Endothelial cell of umbilical vein (primary cell): ENCODE measurements at regions of chr20 and their contacts with region 1.

Region 1: DNA sequence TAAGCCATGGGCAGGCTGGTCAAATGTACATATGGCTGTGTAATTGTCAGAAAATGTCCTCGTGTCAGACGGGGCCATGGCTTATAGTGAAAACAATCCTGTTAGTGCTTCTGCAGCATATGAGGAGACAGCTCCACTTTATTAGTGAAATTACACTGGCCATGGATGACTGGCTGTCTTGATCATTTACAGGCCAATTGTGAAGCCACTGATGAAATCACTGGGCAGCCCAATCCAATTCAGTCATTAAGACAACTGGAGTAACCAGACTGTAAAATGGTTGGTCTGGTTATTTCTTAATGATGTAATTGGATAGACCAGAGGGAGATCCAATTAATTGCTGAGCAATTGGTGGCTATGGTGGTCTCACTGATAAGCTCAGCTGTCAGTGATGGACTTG is 749.5 kb downstream of the KIF16B start:
- DNase-seq: no peak
- H3K4me3 ChIP-seq: no peak overlapping the region
- H3K27ac ChIP-seq: no peak overlapping the region
- H3K4me1 ChIP-seq: no peaks in the 10 kb centered on the region
- H3K27me3 ChIP-seq: no peaks in the 10 kb centered on the region
- CTCF ChIP-seq: no peak
- POLR2A ChIP-seq: no peak

Region 2: GRCh38 chr20:15643714-15644113 is 180.0 kb before region 1 on chr20:
- CTCF ChIA-PET with region 1: no interaction called
- POLR2A ChIA-PET with region 1: no interaction called
- dilution Hi-C with region 1: no loop called
- intact Hi-C with region 1: no loop called
- DNase-seq: peak; percentile 15
- H3K4me3 ChIP-seq: no peak overlapping the region
- H3K27ac ChIP-seq: no peak overlapping the region
- H3K4me1 ChIP-seq: peaks cover 5% of the 10 kb centered on the region
- H3K27me3 ChIP-seq: peaks cover 0 to 2% of the 10 kb centered on the region in 2 experiments
- CTCF ChIP-seq: peak; percentile 22 to 39
- POLR2A ChIP-seq: no peak

Region 3: GRCh38 chr20:15842872-15843271 is 19.2 kb after region 1 on chr20:
- CTCF ChIA-PET with region 1: no interaction called
- POLR2A ChIA-PET with region 1: no interaction called
- dilution Hi-C with region 1: no loop called
- intact Hi-C with region 1: loop called (anchors 1 kb)
- DNase-seq: no peak
- H3K4me3 ChIP-seq: no peak overlapping the region
- H3K27ac ChIP-seq: no peak overlapping the region
- H3K4me1 ChIP-seq: no peaks in the 10 kb centered on the region
- H3K27me3 ChIP-seq: no peaks in the 10 kb centered on the region
- CTCF ChIP-seq: no peak
- POLR2A ChIP-seq: no peak